IMR-90 (cell line): ENCODE measurements at regions of chr5 and their contacts with region 1.

Region 1: DNA sequence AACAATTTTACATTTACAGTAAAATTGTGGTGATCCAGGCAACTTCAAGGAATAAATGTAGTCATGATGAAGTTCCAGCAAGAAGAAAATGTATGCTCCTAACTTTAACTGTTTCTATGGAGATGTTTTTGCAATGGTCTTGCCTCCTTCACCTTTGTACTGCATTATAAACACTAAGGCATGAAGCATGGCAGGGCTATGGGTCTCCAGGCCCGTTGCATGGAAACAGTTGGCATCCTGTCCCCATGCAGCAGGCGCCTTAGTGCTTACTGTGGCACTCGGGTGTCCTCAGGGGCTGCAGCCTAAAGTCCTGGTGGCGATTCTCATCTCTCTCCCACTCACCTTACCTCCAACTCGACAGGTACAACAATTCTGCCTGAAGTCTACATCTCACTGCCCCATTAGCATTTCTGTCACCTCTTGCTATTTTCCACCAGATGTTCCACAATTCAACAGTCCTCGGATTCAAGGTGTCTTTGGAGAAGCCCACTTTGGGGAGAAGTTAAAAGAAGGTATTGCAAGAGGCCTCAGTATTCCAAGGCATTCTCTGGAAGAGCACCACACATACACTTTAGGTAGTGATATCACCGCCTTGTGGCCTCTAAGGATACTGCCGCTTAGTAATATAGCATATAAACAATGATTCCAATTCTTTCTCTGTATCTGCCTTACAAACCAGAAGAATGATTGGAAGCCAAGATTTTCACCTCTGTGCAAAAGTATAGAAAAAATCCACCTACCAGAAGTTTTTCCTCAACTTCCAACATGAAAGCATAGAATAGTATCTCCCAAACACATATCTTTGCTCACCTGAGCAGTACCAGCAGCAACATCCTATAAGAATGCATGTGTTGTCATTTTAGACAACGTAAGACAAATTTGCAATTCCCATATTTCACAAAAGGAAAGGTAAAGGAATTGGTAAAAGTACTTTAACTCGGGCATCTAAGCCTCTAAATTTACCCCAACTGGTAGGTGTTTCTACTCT is 5.1 kb downstream of the LIFR start:
- DNase-seq: peak; percentile 73
- ATAC-seq: 0 out of 2 replicates have a peak, but pooled peaks have one; percentile 25
- H3K4me3 ChIP-seq: no peak overlapping the region
- H3K27ac ChIP-seq: no peak overlapping the region
- H3K4me1 ChIP-seq: peaks cover 13% of the 10 kb centered on the region
- H3K27me3 ChIP-seq: no peaks in the 10 kb centered on the region
- CTCF ChIP-seq: peak; percentile 71
- POLR2A ChIP-seq: no peak
- RAD21 ChIP-seq: peak; percentile 69

Region 2: GRCh38 chr5:38420691-38421390 is 130.5 kb before region 1 on chr5:
- CTCF ChIA-PET with region 1: interaction called, 5 read pairs
- POLR2A ChIA-PET with region 1: no interaction called
- dilution Hi-C with region 1: no loop called
- in situ Hi-C with region 1: no loop called
- intact Hi-C with region 1: loop called (anchors 5 kb)
- DNase-seq: peak; percentile 69
- ATAC-seq: peak; percentile 85
- H3K4me3 ChIP-seq: no peak overlapping the region
- H3K27ac ChIP-seq: no peak overlapping the region
- H3K4me1 ChIP-seq: peaks cover 10% of the 10 kb centered on the region
- H3K27me3 ChIP-seq: peaks cover 5% of the 10 kb centered on the region; the same call in 1 of the 2 replicates
- CTCF ChIP-seq: peak; percentile 75
- POLR2A ChIP-seq: no peak
- RAD21 ChIP-seq: peak; percentile 75

Region 3: GRCh38 chr5:38463634-38464521 is 87.4 kb before region 1 on chr5:
- CTCF ChIA-PET with region 1: no interaction called
- POLR2A ChIA-PET with region 1: no interaction called
- dilution Hi-C with region 1: no loop called
- in situ Hi-C with region 1: no loop called
- intact Hi-C with region 1: loop called (anchors 5 kb)
- DNase-seq: peak; percentile 93
- ATAC-seq: peak; percentile 52
- H3K4me3 ChIP-seq: no peak overlapping the region
- H3K27ac ChIP-seq: peak overlapping the region; percentile 22
- H3K4me1 ChIP-seq: peaks cover 45% of the 10 kb centered on the region
- H3K27me3 ChIP-seq: no peaks in the 10 kb centered on the region
- CTCF ChIP-seq: no peak
- POLR2A ChIP-seq: no peak
- RAD21 ChIP-seq: no peak

Region 4: DNA sequence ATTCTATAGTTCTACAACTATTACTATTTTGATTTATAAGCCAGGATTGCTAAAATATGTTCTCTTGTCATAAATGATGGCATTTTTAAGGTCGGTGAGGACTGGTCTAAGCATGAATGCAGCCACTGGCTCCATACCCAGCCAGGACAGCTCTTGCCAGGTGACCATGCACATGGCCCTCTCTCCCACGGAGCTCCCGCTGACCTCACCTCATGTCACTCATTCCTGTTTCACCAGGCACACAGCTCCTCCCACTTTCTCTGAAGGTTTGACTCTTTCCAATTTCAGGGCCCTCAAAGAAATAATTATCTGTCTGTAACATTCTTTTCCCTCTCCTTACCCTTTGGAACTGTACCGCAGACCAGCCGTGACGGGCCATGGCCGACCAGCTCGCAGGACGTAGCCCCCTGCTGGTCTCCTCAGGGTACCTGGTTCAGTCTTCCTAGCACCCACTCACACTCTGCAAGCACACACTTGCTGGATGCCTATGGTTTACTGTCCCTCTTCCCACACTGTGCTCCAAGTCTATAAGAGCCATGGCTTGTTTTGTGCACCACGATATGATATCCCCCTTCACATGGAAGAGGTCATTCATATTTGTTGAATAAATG is 67.4 kb before region 1 on chr5:
- CTCF ChIA-PET with region 1: no interaction called
- POLR2A ChIA-PET with region 1: no interaction called
- dilution Hi-C with region 1: no loop called
- in situ Hi-C with region 1: no loop called
- intact Hi-C with region 1: no loop called
- DNase-seq: no peak
- ATAC-seq: no peak
- H3K4me3 ChIP-seq: no peak overlapping the region
- H3K27ac ChIP-seq: no peak overlapping the region
- H3K4me1 ChIP-seq: no peaks in the 10 kb centered on the region; the same call in 1 of the 2 replicates
- H3K27me3 ChIP-seq: no peaks in the 10 kb centered on the region
- CTCF ChIP-seq: no peak
- POLR2A ChIP-seq: no peak
- RAD21 ChIP-seq: no peak

Region 5: GRCh38 chr5:38563624-38564023 is 12.3 kb after region 1 on chr5:
- CTCF ChIA-PET with region 1: no interaction called
- POLR2A ChIA-PET with region 1: no interaction called
- dilution Hi-C with region 1: no loop called
- in situ Hi-C with region 1: no loop called
- intact Hi-C with region 1: no loop called
- DNase-seq: no peak
- ATAC-seq: no peak
- H3K4me3 ChIP-seq: no peak overlapping the region
- H3K27ac ChIP-seq: no peak overlapping the region
- H3K4me1 ChIP-seq: no peaks in the 10 kb centered on the region
- H3K27me3 ChIP-seq: peaks cover 10% of the 10 kb centered on the region
- CTCF ChIP-seq: no peak
- POLR2A ChIP-seq: no peak
- RAD21 ChIP-seq: no peak

Region 6: DNA sequence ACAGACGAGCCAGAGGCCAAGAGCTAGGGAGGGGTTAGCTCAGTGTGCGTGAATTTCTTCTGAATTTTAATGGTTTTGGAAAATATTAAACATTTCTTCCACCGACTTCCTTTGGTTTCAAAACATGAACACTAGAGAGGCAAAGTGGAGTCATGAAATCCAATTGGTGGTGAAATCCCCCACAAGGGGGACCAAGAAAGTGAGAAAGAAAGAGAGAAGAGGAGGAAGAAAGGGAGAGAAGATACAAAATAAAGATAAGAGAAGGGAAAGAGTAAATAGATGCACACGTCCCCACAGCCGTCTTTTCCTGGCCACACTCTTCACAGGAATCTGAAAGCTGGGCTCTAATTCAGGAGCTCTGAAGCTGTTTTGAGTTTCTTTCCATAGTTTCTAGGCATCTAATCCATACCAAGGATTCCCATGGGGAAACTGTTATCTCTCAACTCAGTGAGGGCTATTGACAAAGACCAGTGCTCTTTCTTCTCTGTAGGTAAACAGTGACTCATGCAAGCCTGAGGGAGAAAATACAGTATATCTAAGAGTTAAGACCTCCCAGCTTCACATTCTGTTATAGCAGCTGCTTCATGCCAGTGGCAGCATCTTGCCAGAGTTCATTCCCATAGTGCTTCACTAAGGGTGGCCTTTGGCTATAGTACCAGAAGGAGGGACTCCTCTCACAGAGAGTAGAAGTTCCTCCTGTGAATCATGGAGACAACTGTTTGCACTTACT is 120.9 kb after region 1 on chr5:
- CTCF ChIA-PET with region 1: no interaction called
- POLR2A ChIA-PET with region 1: no interaction called
- dilution Hi-C with region 1: no loop called
- in situ Hi-C with region 1: no loop called
- intact Hi-C with region 1: loop called (anchors 5 kb)
- DNase-seq: peak; percentile 56
- ATAC-seq: peak; percentile 90
- H3K4me3 ChIP-seq: no peak overlapping the region
- H3K27ac ChIP-seq: no peak overlapping the region
- H3K4me1 ChIP-seq: peaks cover 6% of the 10 kb centered on the region; the same call in 1 of the 2 replicates
- H3K27me3 ChIP-seq: peaks cover 8% of the 10 kb centered on the region; the same call in 1 of the 2 replicates
- CTCF ChIP-seq: no peak
- POLR2A ChIP-seq: no peak
- RAD21 ChIP-seq: no peak